MCF 10A (cell line): ENCODE measurements at regions of chr2 and their contacts with region 1.

Region 1: GRCh38 chr2:191555092-191555742 is 122.7 kb upstream of the NABP1 start:
- DNase-seq: peak; percentile 89
- H3K4me3 Mint-ChIP-seq: no peak overlapping the region
- H3K27ac Mint-ChIP-seq: no peak overlapping the region
- H3K4me1 Mint-ChIP-seq: peaks cover 5% of the 10 kb centered on the region
- H3K27me3 Mint-ChIP-seq: no peaks in the 10 kb centered on the region
- CTCF ChIP-seq: peak; percentile 72

Region 2: DNA sequence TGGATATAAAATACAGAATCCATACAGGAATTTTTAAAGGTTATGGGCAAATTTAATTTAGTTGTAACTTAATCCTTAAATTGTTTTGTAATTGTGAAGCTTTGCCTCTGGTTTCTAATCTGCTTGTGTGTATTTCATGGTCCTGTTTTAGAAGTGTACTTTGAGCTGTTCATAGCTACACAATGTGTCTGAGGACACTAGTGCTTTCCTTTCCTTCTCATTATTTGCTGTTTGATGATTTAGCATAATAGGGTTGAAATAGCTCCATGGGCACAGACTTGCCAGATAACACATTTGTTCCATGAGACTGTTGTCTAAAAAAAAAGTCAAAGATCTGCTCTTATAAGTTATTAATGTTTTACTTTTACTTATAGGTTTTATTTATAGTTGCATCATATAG is 175.8 kb before region 1 on chr2:
- CTCF ChIA-PET with region 1: no interaction called
- POLR2A ChIA-PET with region 1: no interaction called
- intact Hi-C with region 1: no loop called
- DNase-seq: no peak
- H3K4me3 Mint-ChIP-seq: no peak overlapping the region
- H3K27ac Mint-ChIP-seq: no peak overlapping the region
- H3K4me1 Mint-ChIP-seq: peaks cover 30% of the 10 kb centered on the region
- H3K27me3 Mint-ChIP-seq: no peaks in the 10 kb centered on the region
- CTCF ChIP-seq: no peak

Region 3: GRCh38 chr2:191539068-191539467 is 16.1 kb before region 1 on chr2:
- CTCF ChIA-PET with region 1: interaction called, 13 read pairs
- POLR2A ChIA-PET with region 1: no interaction called
- intact Hi-C with region 1: no loop called
- DNase-seq: peak; percentile 44
- H3K4me3 Mint-ChIP-seq: no peak overlapping the region
- H3K27ac Mint-ChIP-seq: no peak overlapping the region
- H3K4me1 Mint-ChIP-seq: no peaks in the 10 kb centered on the region
- H3K27me3 Mint-ChIP-seq: no peaks in the 10 kb centered on the region
- CTCF ChIP-seq: peak; percentile 49

Region 4: DNA sequence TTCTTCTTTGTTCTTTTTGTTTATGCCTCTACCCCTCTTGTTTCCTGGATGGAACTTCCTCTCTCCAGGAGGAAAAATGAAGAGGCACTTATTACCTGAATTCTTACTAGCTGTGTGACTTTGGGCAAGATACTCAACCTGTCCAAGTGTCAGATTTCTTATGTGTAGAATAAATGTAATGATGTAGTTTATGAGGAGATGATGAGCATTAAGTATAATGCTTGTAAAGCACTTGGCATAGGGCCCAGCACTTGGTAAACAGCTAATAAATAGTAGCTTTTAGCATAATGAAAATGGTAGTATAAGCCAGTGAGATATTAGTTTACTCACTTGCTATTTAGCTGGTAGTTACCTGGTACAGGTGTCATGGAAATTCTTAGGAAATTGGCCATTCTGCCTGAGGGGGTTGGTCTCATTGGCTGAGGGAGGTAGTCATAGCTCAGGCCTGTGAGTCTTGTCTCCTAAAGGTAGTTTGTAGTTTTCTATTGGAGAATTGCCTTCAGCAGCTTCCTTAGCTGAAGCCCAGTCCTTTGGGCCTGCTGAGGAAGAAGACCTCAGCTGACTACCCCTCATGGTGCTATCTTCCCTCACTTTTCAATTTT is 10.7 kb before region 1 on chr2:
- CTCF ChIA-PET with region 1: interaction called, 13 read pairs
- POLR2A ChIA-PET with region 1: no interaction called
- intact Hi-C with region 1: no loop called
- DNase-seq: no peak
- H3K4me3 Mint-ChIP-seq: no peak overlapping the region
- H3K27ac Mint-ChIP-seq: no peak overlapping the region
- H3K4me1 Mint-ChIP-seq: no peaks in the 10 kb centered on the region
- H3K27me3 Mint-ChIP-seq: no peaks in the 10 kb centered on the region
- CTCF ChIP-seq: no peak

Region 5: GRCh38 chr2:191566344-191566743 is 11.1 kb after region 1 on chr2:
- CTCF ChIA-PET with region 1: interaction called, 55 read pairs
- POLR2A ChIA-PET with region 1: interaction called, 3 read pairs
- intact Hi-C with region 1: no loop called
- DNase-seq: peak; percentile 80
- H3K4me3 Mint-ChIP-seq: no peak overlapping the region
- H3K27ac Mint-ChIP-seq: no peak overlapping the region
- H3K4me1 Mint-ChIP-seq: no peaks in the 10 kb centered on the region
- H3K27me3 Mint-ChIP-seq: no peaks in the 10 kb centered on the region
- CTCF ChIP-seq: peak; percentile 76

Region 6: GRCh38 chr2:191806396-191806795 is 251.2 kb after region 1 on chr2:
- CTCF ChIA-PET with region 1: interaction called, 45 read pairs
- POLR2A ChIA-PET with region 1: interaction called, 3 read pairs
- intact Hi-C with region 1: no loop called
- DNase-seq: peak; percentile 14
- H3K4me3 Mint-ChIP-seq: no peak overlapping the region
- H3K27ac Mint-ChIP-seq: no peak overlapping the region
- H3K4me1 Mint-ChIP-seq: no peaks in the 10 kb centered on the region
- H3K27me3 Mint-ChIP-seq: no peaks in the 10 kb centered on the region
- CTCF ChIP-seq: no peak

Region 7: DNA sequence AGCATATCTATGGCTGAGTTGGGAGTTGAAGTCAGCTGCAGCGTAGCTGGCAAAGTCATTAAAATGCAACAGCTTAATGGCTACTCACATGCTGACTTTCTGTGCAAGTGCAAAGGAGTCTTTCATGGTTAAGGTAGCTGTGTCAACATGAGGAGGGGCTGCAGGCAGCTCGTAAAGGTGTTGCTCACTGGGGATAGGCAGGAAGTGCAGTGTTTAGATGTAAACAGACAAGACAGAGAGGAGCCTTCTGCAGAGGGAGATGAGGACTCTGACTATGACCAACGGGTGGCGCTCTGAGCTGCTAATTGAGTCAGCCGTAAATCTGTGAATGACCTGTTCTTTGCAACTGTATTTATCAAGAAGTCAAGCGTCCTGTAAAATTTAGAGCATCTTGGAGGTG is 314.0 kb after region 1 on chr2:
- CTCF ChIA-PET with region 1: interaction called, 4 read pairs
- POLR2A ChIA-PET with region 1: no interaction called
- intact Hi-C with region 1: loop called (anchors 5 kb)
- DNase-seq: peak; percentile 60
- H3K4me3 Mint-ChIP-seq: no peak overlapping the region
- H3K27ac Mint-ChIP-seq: peak overlapping the region; percentile 20
- H3K4me1 Mint-ChIP-seq: peaks cover 50% of the 10 kb centered on the region
- H3K27me3 Mint-ChIP-seq: no peaks in the 10 kb centered on the region
- CTCF ChIP-seq: no peak

Region 8: GRCh38 chr2:192140236-192140839 is 585.1 kb after region 1 on chr2:
- CTCF ChIA-PET with region 1: no interaction called
- POLR2A ChIA-PET with region 1: no interaction called
- intact Hi-C with region 1: no loop called
- DNase-seq: no peak
- H3K4me3 Mint-ChIP-seq: no peak overlapping the region
- H3K27ac Mint-ChIP-seq: no peak overlapping the region
- H3K4me1 Mint-ChIP-seq: peaks cover 5% of the 10 kb centered on the region
- H3K27me3 Mint-ChIP-seq: no peaks in the 10 kb centered on the region
- CTCF ChIP-seq: no peak

Region 9: GRCh38 chr2:192286093-192286701 is 731.0 kb after region 1 on chr2:
- CTCF ChIA-PET with region 1: no interaction called
- POLR2A ChIA-PET with region 1: no interaction called
- intact Hi-C with region 1: loop called (anchors 10 kb)
- DNase-seq: peak; percentile 68
- H3K4me3 Mint-ChIP-seq: no peak overlapping the region
- H3K27ac Mint-ChIP-seq: no peak overlapping the region
- H3K4me1 Mint-ChIP-seq: no peaks in the 10 kb centered on the region
- H3K27me3 Mint-ChIP-seq: no peaks in the 10 kb centered on the region
- CTCF ChIP-seq: peak; percentile 43